ENCODE measurements at regions of chr19 and their contacts with region 1.

Region 1: GRCh38 chr19:4199699-4200293 is 17.3 kb downstream of the ANKRD24 start:
- DNase-seq: no peak
- ATAC-seq: no peak
- H3K4me3 ChIP-seq: no peak overlapping the region
- H3K27ac ChIP-seq: no peak overlapping the region
- H3K4me1 ChIP-seq: no peaks in the 10 kb centered on the region
- H3K27me3 ChIP-seq: no peaks in the 10 kb centered on the region; a peak in 1 of 4 replicates
- CTCF ChIP-seq: 0 out of 6 replicates have a peak, but pooled peaks of 1 of the 3 experiments have one; percentile 7
- EP300 ChIP-seq: no peak
- POLR2A ChIP-seq: no peak
- RAD21 ChIP-seq: no peak

Region 2: GRCh38 chr19:3710265-3710812 is 489.5 kb before region 1 on chr19:
- CTCF ChIA-PET with region 1: no interaction called
- POLR2A ChIA-PET with region 1: no interaction called
- RAD21 ChIA-PET with region 1: no interaction called
- SMC1A ChIA-PET with region 1: no interaction called
- in situ Hi-C with region 1: no loop called
- intact Hi-C with region 1: loop called (anchors 5 kb)
- DNase-seq: no peak
- ATAC-seq: peak; percentile 52
- H3K4me3 ChIP-seq: no peak overlapping the region
- H3K27ac ChIP-seq: no peak overlapping the region
- H3K4me1 ChIP-seq: no peaks in the 10 kb centered on the region
- H3K27me3 ChIP-seq: no peaks in the 10 kb centered on the region
- CTCF ChIP-seq: no peak
- EP300 ChIP-seq: no peak
- POLR2A ChIP-seq: no peak
- RAD21 ChIP-seq: no peak

Region 3: DNA sequence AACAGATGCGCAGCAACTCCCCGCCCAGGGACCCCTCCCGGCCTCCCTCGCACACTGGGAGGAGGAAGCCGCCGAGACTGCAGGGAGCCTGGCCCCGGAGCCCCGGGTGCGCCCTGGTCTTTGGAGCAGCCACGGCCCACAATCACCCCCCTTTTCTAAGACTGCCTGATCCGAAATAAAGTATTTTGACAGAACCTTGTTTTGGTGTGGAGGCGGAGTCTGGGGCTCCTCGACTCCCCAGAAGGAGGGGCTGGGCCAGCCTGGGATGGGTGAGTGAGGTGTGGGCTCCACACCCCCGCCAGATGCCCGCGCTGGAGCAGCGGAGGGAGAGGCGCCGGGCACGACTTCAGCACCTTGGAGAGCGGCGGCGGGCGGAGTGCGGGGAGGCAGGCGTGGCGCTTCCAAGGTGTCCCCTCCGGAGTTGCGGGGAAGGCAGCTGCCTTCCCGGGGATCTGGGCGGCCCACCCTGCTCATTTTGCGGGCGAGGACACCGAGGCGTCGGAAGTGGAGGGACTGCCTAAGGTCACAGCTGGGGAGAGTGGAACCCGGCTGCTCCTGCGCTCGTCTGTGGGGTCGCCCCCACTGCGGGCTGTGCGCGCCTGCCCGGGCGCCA is 26.8 kb before region 1 on chr19:
- CTCF ChIA-PET with region 1: interaction called, 5 read pairs
- POLR2A ChIA-PET with region 1: no interaction called
- RAD21 ChIA-PET with region 1: no interaction called
- SMC1A ChIA-PET with region 1: no interaction called
- in situ Hi-C with region 1: no loop called
- intact Hi-C with region 1: loop called (anchors 5 kb)
- DNase-seq: no peak
- ATAC-seq: peak; percentile 81
- H3K4me3 ChIP-seq: no peak overlapping the region
- H3K27ac ChIP-seq: no peak overlapping the region
- H3K4me1 ChIP-seq: no peaks in the 10 kb centered on the region
- H3K27me3 ChIP-seq: no peaks in the 10 kb centered on the region
- CTCF ChIP-seq: no peak
- EP300 ChIP-seq: no peak
- POLR2A ChIP-seq: peak; percentile 39; the same call in 1 of the 2 replicates
- RAD21 ChIP-seq: no peak

Region 4: GRCh38 chr19:4182084-4182810 is 17.5 kb before region 1 on chr19 and contains the starts of genes ANKRD24 and SIRT6:
- CTCF ChIA-PET with region 1: interaction called, 13 read pairs
- POLR2A ChIA-PET with region 1: no interaction called
- RAD21 ChIA-PET with region 1: no interaction called
- SMC1A ChIA-PET with region 1: no interaction called
- in situ Hi-C with region 1: no loop called
- intact Hi-C with region 1: no loop called
- DNase-seq: peak; percentile 81
- ATAC-seq: peak; percentile 87
- H3K4me3 ChIP-seq: peak within 1 kb of the TSS; percentile 83
- H3K27ac ChIP-seq: peak within 1 kb of the TSS; percentile 94
- H3K4me1 ChIP-seq: peaks cover 15% of the 10 kb centered on the region
- H3K27me3 ChIP-seq: no peaks in the 10 kb centered on the region
- CTCF ChIP-seq: no peak
- EP300 ChIP-seq: peak; percentile 26 to 34; a peak in 1 of 4 replicates
- POLR2A ChIP-seq: peak; percentile 88
- RAD21 ChIP-seq: no peak
- polyA plus RNA-seq, gene ANKRD24: 0.02 TPM in 1 of 2 experiments, not detected in the other
- polyA plus RNA-seq, gene SIRT6: 1.3 to 1.5 TPM

Region 5: DNA sequence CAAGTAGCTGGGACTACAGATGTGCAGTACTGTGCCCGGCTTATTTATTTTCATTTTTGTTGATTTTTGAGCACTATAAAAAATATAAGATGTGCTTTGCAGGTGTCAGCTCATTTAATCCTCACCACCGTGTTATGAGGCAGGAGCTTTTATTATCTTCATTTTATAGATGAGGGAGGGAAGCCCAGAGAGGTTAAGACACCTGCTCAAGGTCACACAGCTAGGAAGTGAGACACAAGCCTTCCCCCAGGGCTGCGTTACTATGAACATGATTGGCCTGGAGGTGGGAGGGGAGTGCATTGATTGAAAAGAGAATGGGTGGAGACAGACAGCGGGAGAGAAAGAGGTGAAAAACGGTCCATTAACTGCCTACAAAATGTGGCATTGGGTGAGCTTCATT is 10.2 kb before region 1 on chr19:
- CTCF ChIA-PET with region 1: interaction called, 17 read pairs
- POLR2A ChIA-PET with region 1: interaction called, 3 read pairs
- RAD21 ChIA-PET with region 1: no interaction called
- SMC1A ChIA-PET with region 1: interaction called, 3 read pairs
- in situ Hi-C with region 1: no loop called
- intact Hi-C with region 1: no loop called
- DNase-seq: no peak
- ATAC-seq: no peak
- H3K4me3 ChIP-seq: no peak overlapping the region
- H3K27ac ChIP-seq: no peak overlapping the region
- H3K4me1 ChIP-seq: no peaks in the 10 kb centered on the region
- H3K27me3 ChIP-seq: no peaks in the 10 kb centered on the region
- CTCF ChIP-seq: no peak
- EP300 ChIP-seq: no peak
- POLR2A ChIP-seq: no peak
- RAD21 ChIP-seq: no peak

Measured in GM12878 (cell line).